ENCODE measurements at regions of chr16 and their contacts with region 1.

Region 1: DNA sequence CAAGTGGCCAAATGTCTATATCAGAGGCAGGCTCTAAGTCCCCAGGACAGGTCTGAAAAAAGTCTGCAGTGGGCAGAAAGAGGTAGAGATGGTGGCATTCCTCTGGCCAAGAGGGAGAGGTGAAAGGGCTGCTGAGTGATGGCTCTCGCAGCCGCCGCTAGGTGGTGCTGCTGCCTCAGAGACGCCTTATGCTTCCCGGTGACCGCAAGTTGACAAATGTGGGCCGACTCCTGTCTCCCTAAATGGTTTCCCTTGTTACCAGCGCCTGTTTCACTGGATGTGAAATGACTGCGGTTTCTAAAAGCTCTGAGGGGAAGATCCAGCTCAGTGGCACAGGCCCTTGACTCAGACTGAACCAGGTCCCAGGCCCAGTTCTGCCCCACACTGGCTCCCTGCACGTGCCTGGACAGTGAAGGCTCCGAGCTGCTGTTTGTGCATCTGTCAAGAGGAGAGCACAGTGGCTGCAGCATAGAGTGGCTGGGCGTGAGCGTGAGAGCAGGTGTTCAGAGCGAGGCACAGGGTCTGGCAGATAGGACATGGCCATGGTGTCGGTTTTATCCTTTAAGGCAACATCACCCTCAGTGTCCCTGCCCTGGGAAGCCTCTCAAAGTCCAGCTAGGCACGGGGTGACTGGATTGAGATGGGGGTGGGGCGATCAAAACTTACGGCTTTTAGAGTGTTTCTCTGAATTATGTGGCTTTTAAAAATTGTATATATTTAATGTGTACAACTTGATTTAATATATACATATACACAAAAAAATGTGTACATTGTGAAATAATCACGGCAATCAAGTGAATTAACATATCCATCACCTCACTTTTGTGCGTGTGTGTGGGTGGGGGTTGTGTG is 19.9 kb downstream of the CLEC16A start:
- DNase-seq: peak; percentile 32
- ATAC-seq: peak; percentile 96
- H3K4me3 ChIP-seq: no peak overlapping the region
- H3K27ac ChIP-seq: no peak overlapping the region
- H3K4me1 ChIP-seq: peaks cover 0 to 3% of the 10 kb centered on the region in 2 experiments; a peak in 1 of 4 replicates
- H3K27me3 ChIP-seq: no peaks in the 10 kb centered on the region
- CTCF ChIP-seq: peak; percentile 76 to 96 (median 96)
- POLR2A ChIP-seq: no peak
- RAD21 ChIP-seq: peak; percentile 92

Region 2: GRCh38 chr16:10851512-10851911 is 112.8 kb before region 1 on chr16:
- CTCF ChIA-PET with region 1: no interaction called
- POLR2A ChIA-PET with region 1: no interaction called
- RAD21 ChIA-PET with region 1: no interaction called
- intact Hi-C with region 1: no loop called
- DNase-seq: no peak
- ATAC-seq: no peak
- H3K4me3 ChIP-seq: no peak overlapping the region
- H3K27ac ChIP-seq: no peak overlapping the region
- H3K4me1 ChIP-seq: no peaks in the 10 kb centered on the region
- H3K27me3 ChIP-seq: peaks cover 3% of the 10 kb centered on the region
- CTCF ChIP-seq: no peak
- POLR2A ChIP-seq: no peak
- RAD21 ChIP-seq: no peak

Region 3: GRCh38 chr16:11128265-11129141 is 164.2 kb after region 1 on chr16:
- CTCF ChIA-PET with region 1: no interaction called
- POLR2A ChIA-PET with region 1: no interaction called
- RAD21 ChIA-PET with region 1: no interaction called
- intact Hi-C with region 1: no loop called
- DNase-seq: no peak
- ATAC-seq: no peak
- H3K4me3 ChIP-seq: no peak overlapping the region
- H3K27ac ChIP-seq: no peak overlapping the region
- H3K4me1 ChIP-seq: peaks cover 12 to 13% of the 10 kb centered on the region in 2 experiments
- H3K27me3 ChIP-seq: no peaks in the 10 kb centered on the region
- CTCF ChIP-seq: no peak
- POLR2A ChIP-seq: no peak
- RAD21 ChIP-seq: no peak

Region 4: GRCh38 chr16:11356573-11357331 is 392.5 kb after region 1 on chr16:
- CTCF ChIA-PET with region 1: interaction called, 12 read pairs
- POLR2A ChIA-PET with region 1: no interaction called
- RAD21 ChIA-PET with region 1: no interaction called
- intact Hi-C with region 1: no loop called
- DNase-seq: no peak
- ATAC-seq: peak; percentile 72
- H3K4me3 ChIP-seq: peak overlapping the region in 1 of 2 experiments; percentile 37; a peak in 2 of 4 replicates
- H3K27ac ChIP-seq: peak overlapping the region; percentile 59
- H3K4me1 ChIP-seq: peaks cover 34 to 46% of the 10 kb centered on the region in 2 experiments
- H3K27me3 ChIP-seq: no peaks in the 10 kb centered on the region
- CTCF ChIP-seq: peak; percentile 57 to 73 (median 68); a peak in 5 of 6 replicates
- POLR2A ChIP-seq: no peak
- RAD21 ChIP-seq: peak; percentile 85

Region 5: DNA sequence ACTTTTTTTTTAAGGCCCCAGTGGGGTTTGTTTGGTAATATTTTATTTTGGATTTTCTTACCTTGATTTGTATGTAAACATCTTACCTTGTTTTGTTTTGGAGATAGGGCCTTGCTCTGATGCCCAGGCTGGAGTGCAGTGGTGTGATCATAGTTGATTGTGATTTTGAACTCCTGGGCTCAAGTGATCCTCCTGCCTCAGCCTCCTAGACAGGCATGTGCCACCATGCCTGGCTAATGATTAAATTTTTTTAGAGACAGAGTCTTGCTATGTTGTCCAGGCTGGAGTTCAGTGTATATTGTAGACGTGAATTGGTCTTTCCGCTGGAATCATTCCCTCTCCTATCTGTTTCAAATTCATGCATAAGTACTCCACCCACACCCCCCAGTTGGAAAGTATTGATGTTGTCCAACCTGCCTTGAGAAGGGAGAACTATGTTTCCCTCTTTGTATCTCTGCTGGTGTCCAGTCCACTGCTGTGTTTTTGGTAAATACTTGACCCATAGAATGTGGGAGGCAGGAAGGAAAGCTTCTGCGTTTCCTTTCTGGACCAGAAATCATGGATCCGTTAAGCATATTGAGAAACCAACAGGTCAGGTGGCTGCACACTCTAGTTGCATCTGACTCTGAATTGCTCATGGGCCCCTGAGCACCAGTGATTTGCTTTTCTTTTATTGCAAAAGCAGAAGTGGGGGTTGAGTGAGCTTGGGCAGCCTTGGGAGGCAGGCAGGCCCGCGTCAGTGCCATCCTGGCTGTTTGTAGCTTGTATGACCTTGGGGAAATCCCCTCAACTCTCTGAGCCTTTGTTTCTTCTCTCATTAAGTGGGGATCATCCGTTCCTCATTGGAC is 406.0 kb after region 1 on chr16:
- CTCF ChIA-PET with region 1: interaction called, 3 read pairs
- POLR2A ChIA-PET with region 1: no interaction called
- RAD21 ChIA-PET with region 1: no interaction called
- intact Hi-C with region 1: loop called (anchors 5 kb)
- DNase-seq: no peak
- ATAC-seq: no peak
- H3K4me3 ChIP-seq: no peak overlapping the region
- H3K27ac ChIP-seq: no peak overlapping the region
- H3K4me1 ChIP-seq: peaks cover 0 to 5% of the 10 kb centered on the region in 2 experiments; a peak in 2 of 4 replicates
- H3K27me3 ChIP-seq: no peaks in the 10 kb centered on the region
- CTCF ChIP-seq: no peak
- POLR2A ChIP-seq: no peak
- RAD21 ChIP-seq: no peak

Region 6: GRCh38 chr16:11526655-11527350 is 562.5 kb after region 1 on chr16:
- CTCF ChIA-PET with region 1: no interaction called
- POLR2A ChIA-PET with region 1: no interaction called
- RAD21 ChIA-PET with region 1: no interaction called
- intact Hi-C with region 1: loop called (anchors 5 kb)
- DNase-seq: no peak
- ATAC-seq: no peak
- H3K4me3 ChIP-seq: no peak overlapping the region
- H3K27ac ChIP-seq: no peak overlapping the region
- H3K4me1 ChIP-seq: peaks cover 0 to 10% of the 10 kb centered on the region in 2 experiments; a peak in 1 of 4 replicates
- H3K27me3 ChIP-seq: no peaks in the 10 kb centered on the region
- CTCF ChIP-seq: no peak
- POLR2A ChIP-seq: no peak
- RAD21 ChIP-seq: no peak

Region 7: DNA sequence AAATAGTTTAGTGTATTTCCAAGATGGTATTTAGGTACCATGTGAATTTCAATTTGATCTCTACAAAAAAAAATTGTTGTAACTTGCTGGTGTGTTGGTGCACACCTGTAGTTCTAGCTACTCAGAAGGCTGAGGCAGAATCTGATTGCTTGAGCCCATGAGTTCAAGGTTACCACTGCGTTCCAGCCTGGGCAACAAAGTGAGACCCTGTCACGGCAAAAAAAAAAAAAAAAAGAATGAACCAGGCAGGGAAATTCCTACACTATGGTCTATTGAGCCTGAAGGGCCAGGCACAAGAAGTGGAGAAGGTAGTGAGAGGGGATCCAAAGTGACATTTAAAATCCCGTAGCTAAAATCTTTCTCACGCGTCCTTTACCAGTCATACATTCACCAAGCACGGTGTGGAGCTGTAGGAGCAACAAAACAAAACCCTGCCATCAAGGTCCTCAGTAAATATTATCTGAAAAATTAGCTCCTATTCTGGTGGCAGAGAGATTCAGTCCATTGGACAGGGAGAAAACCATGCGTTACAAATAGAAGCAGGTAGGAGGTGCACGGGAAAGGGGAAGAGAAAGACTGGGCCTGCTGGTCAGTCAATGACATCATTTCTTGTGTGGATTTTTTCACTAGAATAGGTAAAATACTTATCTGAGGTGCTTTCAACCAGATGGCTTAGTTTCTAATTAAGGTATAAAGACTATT is 751.1 kb after region 1 on chr16:
- CTCF ChIA-PET with region 1: interaction called, 5 read pairs
- POLR2A ChIA-PET with region 1: no interaction called
- RAD21 ChIA-PET with region 1: no interaction called
- intact Hi-C with region 1: loop called (anchors 10 kb)
- DNase-seq: no peak
- ATAC-seq: no peak
- H3K4me3 ChIP-seq: no peak overlapping the region
- H3K27ac ChIP-seq: no peak overlapping the region
- H3K4me1 ChIP-seq: no peaks in the 10 kb centered on the region
- H3K27me3 ChIP-seq: no peaks in the 10 kb centered on the region
- CTCF ChIP-seq: no peak
- POLR2A ChIP-seq: no peak
- RAD21 ChIP-seq: no peak

Measured in HCT116 (cell line).